ENCODE measurements at regions of chr3 and their contacts with region 1.

Region 1: GRCh38 chr3:151086484-151087456 is 1.3 kb downstream of the MED12L start:
- DNase-seq: peak; percentile 76
- H3K4me3 ChIP-seq: peak overlapping the region in 2 of 3 experiments; percentile 5 to 42
- H3K27ac ChIP-seq: no peak overlapping the region
- H3K4me1 ChIP-seq: no peaks in the 10 kb centered on the region
- H3K27me3 ChIP-seq: peaks cover 31 to 46% of the 10 kb centered on the region in 2 experiments
- CTCF ChIP-seq: peak; percentile 26 to 69
- POLR2A ChIP-seq: no peak

Region 2: DNA sequence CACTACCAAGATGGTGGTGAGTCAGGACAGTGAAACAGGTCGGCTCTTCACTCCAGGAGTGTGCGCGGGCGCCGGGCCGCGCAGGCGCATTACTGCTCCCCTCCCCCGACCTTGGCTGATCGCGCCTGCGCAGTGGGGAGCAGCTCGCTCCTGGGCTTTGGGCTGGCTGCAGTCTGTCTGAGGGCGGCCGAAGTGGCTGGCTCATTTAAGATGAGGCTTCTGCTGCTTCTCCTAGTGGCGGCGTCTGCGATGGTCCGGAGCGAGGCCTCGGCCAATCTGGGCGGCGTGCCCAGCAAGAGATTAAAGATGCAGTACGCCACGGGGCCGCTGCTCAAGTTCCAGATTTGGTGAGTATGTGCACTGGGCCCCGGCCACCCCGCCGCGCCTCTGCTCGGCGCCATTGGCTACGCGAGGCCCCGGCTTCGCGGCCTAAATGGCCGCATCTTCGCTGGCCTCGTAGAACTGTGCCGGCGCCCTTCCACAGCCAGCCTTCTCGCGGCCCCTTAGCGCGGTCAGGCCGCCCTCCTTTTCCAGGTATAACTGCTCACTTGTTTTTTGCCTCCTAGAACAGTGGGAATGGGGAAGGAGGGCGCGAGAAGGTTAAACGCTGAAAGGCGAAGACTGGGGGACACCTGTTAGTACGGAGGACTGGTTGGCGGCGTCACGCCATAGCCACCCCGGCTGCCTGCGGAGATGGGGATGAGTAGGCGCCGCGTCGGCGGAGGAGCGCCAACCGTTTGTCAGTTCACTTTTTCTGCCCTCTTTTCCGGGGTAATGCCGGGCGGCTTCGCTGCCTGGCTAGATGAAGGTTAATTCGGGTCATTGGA is 483.4 kb before region 1 on chr3 and contains the start of gene SELENOT:
- CTCF ChIA-PET with region 1: no interaction called
- POLR2A ChIA-PET with region 1: no interaction called
- dilution Hi-C with region 1: no loop called
- intact Hi-C with region 1: loop called (anchors 5 kb)
- DNase-seq: peak; percentile 99
- H3K4me3 ChIP-seq: peak within 1 kb of the TSS; percentile 67 to 72 (median 72)
- H3K27ac ChIP-seq: peak within 1 kb of the TSS; percentile 81
- H3K4me1 ChIP-seq: peaks cover 31% of the 10 kb centered on the region
- H3K27me3 ChIP-seq: no peaks in the 10 kb centered on the region
- CTCF ChIP-seq: peak; percentile 14 to 30
- POLR2A ChIP-seq: peak; percentile 98
- total RNA-seq, gene SELENOT: 89.2 and 103 TPM in 2 replicates

Region 3: DNA sequence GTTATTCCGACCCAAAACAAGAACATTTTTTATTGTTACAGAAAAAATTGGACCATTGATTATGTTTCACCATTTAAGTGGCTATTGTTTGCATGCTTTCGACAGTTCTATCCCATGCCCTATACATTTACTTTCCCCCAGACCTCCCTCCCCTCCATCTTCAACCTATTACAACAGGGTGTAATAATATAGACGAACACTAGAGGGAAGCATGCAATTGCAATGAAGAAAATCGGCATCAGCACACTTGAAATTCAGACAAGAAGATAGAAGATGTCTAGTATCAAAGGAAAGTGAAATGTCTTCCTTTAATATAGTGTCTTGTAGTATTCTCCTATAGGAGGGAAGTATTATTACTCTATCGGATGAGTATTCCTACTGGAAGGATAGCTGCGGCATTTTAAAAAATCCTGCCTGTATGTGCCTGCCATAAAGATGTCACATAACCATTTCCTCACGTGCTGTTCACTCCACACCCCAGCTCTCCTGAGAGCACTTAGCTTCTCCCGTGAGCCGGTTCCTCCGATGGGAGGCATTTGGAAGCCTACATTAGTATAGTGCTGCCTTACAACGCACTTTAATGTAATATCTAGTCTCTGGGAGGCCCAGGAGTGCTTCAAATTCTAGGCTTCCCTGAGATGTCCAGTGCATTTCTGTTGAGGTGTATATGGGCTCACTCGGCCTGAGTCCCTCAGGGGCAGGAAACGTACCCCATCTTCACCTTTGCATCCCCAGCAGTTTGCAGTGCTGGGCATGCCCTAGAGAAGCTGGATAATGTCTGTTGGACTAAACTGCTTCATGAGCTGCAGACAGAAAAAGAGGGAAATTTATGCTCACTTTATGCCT is 365.3 kb before region 1 on chr3:
- CTCF ChIA-PET with region 1: interaction called, 3 read pairs
- POLR2A ChIA-PET with region 1: no interaction called
- dilution Hi-C with region 1: no loop called
- intact Hi-C with region 1: loop called (anchors 1 kb)
- DNase-seq: peak; percentile 69
- H3K4me3 ChIP-seq: no peak overlapping the region
- H3K27ac ChIP-seq: no peak overlapping the region
- H3K4me1 ChIP-seq: no peaks in the 10 kb centered on the region
- H3K27me3 ChIP-seq: peaks cover 0 to 2% of the 10 kb centered on the region in 2 experiments
- CTCF ChIP-seq: peak; percentile 51 to 61
- POLR2A ChIP-seq: no peak

Region 4: GRCh38 chr3:150787741-150788370 is 298.9 kb before region 1 on chr3:
- CTCF ChIA-PET with region 1: interaction called, 8 read pairs
- POLR2A ChIA-PET with region 1: no interaction called
- dilution Hi-C with region 1: no loop called
- intact Hi-C with region 1: loop called (anchors 2 kb)
- DNase-seq: peak; percentile 60
- H3K4me3 ChIP-seq: no peak overlapping the region
- H3K27ac ChIP-seq: no peak overlapping the region
- H3K4me1 ChIP-seq: peaks cover 5% of the 10 kb centered on the region
- H3K27me3 ChIP-seq: peaks cover 16 to 24% of the 10 kb centered on the region in 2 experiments
- CTCF ChIP-seq: peak; percentile 86 to 93
- POLR2A ChIP-seq: no peak

Region 5: GRCh38 chr3:150840802-150841515 is 245.8 kb before region 1 on chr3:
- CTCF ChIA-PET with region 1: no interaction called
- POLR2A ChIA-PET with region 1: no interaction called
- dilution Hi-C with region 1: no loop called
- intact Hi-C with region 1: no loop called
- DNase-seq: no peak
- H3K4me3 ChIP-seq: no peak overlapping the region
- H3K27ac ChIP-seq: no peak overlapping the region
- H3K4me1 ChIP-seq: no peaks in the 10 kb centered on the region
- H3K27me3 ChIP-seq: peaks cover 4 to 10% of the 10 kb centered on the region in 2 experiments
- CTCF ChIP-seq: no peak
- POLR2A ChIP-seq: no peak

Region 6: GRCh38 chr3:150899141-150899540 is 187.6 kb before region 1 on chr3:
- CTCF ChIA-PET with region 1: no interaction called
- POLR2A ChIA-PET with region 1: no interaction called
- dilution Hi-C with region 1: no loop called
- intact Hi-C with region 1: no loop called
- DNase-seq: no peak
- H3K4me3 ChIP-seq: no peak overlapping the region
- H3K27ac ChIP-seq: no peak overlapping the region
- H3K4me1 ChIP-seq: no peaks in the 10 kb centered on the region
- H3K27me3 ChIP-seq: peaks cover 0 to 5% of the 10 kb centered on the region in 2 experiments
- CTCF ChIP-seq: no peak
- POLR2A ChIP-seq: no peak

Region 7: DNA sequence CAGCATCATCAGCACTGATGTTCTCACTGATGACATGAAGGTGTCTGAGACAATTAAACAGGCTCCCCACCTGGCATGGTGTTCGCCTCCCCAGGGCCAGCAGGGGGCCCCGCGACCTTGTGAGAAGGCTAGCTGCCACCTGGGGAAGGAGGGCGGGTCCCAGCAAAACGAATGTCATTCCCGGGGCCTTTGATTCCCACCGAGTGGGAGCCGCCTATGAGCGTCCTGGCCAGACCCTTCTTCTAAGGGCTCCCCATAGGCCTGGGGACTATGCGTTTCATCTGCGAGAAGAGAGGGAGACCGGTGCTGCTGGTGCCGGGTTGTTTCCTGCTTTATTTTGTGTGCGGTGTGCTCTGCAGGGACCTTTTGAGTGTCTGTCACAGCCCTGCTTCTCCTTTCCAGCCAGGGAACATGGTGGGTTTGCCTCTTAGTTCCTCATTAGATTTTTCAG is 161.0 kb before region 1 on chr3:
- CTCF ChIA-PET with region 1: interaction called, 6 read pairs
- POLR2A ChIA-PET with region 1: no interaction called
- dilution Hi-C with region 1: no loop called
- intact Hi-C with region 1: loop called (anchors 2 kb)
- DNase-seq: peak; percentile 16
- H3K4me3 ChIP-seq: no peak overlapping the region
- H3K27ac ChIP-seq: no peak overlapping the region
- H3K4me1 ChIP-seq: no peaks in the 10 kb centered on the region
- H3K27me3 ChIP-seq: peaks cover 5 to 11% of the 10 kb centered on the region in 2 experiments
- CTCF ChIP-seq: peak; percentile 62 to 73
- POLR2A ChIP-seq: no peak

Region 8: GRCh38 chr3:151008699-151009098 is 78.1 kb before region 1 on chr3:
- CTCF ChIA-PET with region 1: interaction called, 13 read pairs
- POLR2A ChIA-PET with region 1: no interaction called
- dilution Hi-C with region 1: no loop called
- intact Hi-C with region 1: loop called (anchors 5 kb)
- DNase-seq: peak; percentile 3
- H3K4me3 ChIP-seq: no peak overlapping the region
- H3K27ac ChIP-seq: no peak overlapping the region
- H3K4me1 ChIP-seq: peaks cover 6% of the 10 kb centered on the region
- H3K27me3 ChIP-seq: peaks cover 2 to 10% of the 10 kb centered on the region in 2 experiments
- CTCF ChIP-seq: no peak
- POLR2A ChIP-seq: no peak

Region 9: GRCh38 chr3:151067158-151067557 is 19.6 kb before region 1 on chr3:
- CTCF ChIA-PET with region 1: interaction called, 14 read pairs
- POLR2A ChIA-PET with region 1: no interaction called
- dilution Hi-C with region 1: no loop called
- intact Hi-C with region 1: loop called (anchors 1 kb)
- DNase-seq: no peak
- H3K4me3 ChIP-seq: no peak overlapping the region
- H3K27ac ChIP-seq: no peak overlapping the region
- H3K4me1 ChIP-seq: no peaks in the 10 kb centered on the region
- H3K27me3 ChIP-seq: peaks cover 4% of the 10 kb centered on the region in 2 experiments
- CTCF ChIP-seq: peak in 1 of 2 donors; percentile 17
- POLR2A ChIP-seq: no peak

Region 10: GRCh38 chr3:151896241-151897012 is 809.7 kb after region 1 on chr3:
- CTCF ChIA-PET with region 1: no interaction called
- POLR2A ChIA-PET with region 1: no interaction called
- dilution Hi-C with region 1: no loop called
- intact Hi-C with region 1: no loop called
- DNase-seq: peak; percentile 75
- H3K4me3 ChIP-seq: no peak overlapping the region
- H3K27ac ChIP-seq: no peak overlapping the region
- H3K4me1 ChIP-seq: peaks cover 32% of the 10 kb centered on the region
- H3K27me3 ChIP-seq: no peaks in the 10 kb centered on the region
- CTCF ChIP-seq: no peak
- POLR2A ChIP-seq: no peak

Measured in endothelial cell of umbilical vein (primary cell).